Activated naive CD4-positive, alpha-beta T cell treated with anti-CD3 and anti-CD28 coated beads for 36 hours (primary cell): ENCODE measurements at regions of chr5 and their contacts with region 1.

Region 1: DNA sequence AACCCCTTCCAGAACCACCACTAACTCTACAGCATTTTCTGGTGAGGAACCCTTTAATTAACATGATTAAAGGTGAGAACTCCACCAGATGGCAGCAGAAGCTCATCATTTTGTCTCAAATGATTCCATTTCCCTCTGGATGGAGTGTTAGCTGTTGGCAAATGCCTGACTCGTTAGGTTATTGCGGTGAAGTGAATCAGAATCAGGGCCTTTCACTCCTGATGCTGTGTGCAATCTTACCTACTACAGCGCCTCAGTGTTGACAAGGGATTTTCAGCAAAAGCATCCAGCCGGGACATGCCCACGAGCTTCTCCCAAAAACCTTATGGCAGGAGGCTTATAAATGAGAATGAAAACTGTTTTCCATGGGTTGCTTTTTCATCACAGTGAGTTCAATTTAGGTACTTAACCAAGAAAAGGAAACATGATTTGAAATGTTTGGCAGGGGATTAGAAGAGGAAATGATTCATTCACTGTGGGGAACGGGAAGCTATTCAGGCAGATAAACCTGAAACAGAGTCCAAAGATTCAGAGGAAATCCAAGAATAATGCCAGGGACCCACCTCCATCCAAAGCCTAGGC is 48.0 kb upstream of the CAST start:
- DNase-seq: peak; percentile 65
- H3K4me3 Mint-ChIP-seq: no peak overlapping the region
- H3K27ac Mint-ChIP-seq: no peak overlapping the region
- H3K4me1 Mint-ChIP-seq: peaks cover 4% of the 10 kb centered on the region
- H3K27me3 Mint-ChIP-seq: peaks cover 5% of the 10 kb centered on the region

Region 2: DNA sequence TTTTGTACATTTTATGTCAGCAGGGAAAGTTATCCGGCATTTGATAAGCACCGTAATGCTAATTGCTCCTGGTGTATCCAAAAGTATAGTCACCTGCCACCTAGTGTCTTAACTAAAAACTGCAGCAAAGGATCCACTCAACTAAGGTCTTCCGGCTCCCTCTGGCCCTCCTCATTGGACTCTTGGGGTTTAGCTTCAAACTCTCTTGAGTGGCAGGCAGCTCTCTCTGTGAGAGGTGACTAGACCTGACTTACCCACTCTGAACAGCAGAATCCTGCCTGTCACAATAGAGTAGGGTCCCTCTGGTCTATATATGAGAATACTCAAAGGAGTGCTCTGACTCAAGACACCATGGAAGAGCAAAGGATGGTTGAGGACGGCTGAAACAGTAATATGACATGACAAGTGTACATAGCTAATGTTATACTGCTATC is 12.4 kb before region 1 on chr5:
- CTCF ChIA-PET with region 1: interaction called, 12 read pairs
- intact Hi-C with region 1: no loop called
- DNase-seq: peak; percentile 68
- H3K4me3 Mint-ChIP-seq: no peak overlapping the region
- H3K27ac Mint-ChIP-seq: no peak overlapping the region
- H3K4me1 Mint-ChIP-seq: peaks cover 10% of the 10 kb centered on the region
- H3K27me3 Mint-ChIP-seq: peaks cover 5% of the 10 kb centered on the region

Region 3: DNA sequence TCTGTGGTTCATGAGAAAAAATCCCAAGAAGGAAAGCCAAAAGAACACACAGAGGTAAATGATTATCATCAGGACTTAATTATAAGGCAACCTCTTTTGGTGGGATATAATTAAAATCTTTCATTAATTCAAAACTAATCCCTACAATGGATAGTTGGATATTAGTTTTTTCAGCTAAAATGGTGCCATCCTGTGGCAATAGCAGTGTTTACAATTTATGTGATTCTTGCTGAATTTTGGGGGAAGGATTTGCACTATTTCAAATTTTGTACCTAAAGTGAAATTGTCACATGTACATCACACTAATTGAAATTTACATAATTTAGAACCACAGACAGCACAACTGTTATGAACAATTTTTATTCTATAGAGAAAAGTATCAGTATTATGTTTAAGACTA is 115.0 kb after region 1 on chr5:
- CTCF ChIA-PET with region 1: interaction called, 5 read pairs
- intact Hi-C with region 1: loop called (anchors 1 kb)
- DNase-seq: no peak
- H3K4me3 Mint-ChIP-seq: no peak overlapping the region
- H3K27ac Mint-ChIP-seq: no peak overlapping the region
- H3K4me1 Mint-ChIP-seq: peaks cover 3% of the 10 kb centered on the region
- H3K27me3 Mint-ChIP-seq: no peaks in the 10 kb centered on the region

Region 4: DNA sequence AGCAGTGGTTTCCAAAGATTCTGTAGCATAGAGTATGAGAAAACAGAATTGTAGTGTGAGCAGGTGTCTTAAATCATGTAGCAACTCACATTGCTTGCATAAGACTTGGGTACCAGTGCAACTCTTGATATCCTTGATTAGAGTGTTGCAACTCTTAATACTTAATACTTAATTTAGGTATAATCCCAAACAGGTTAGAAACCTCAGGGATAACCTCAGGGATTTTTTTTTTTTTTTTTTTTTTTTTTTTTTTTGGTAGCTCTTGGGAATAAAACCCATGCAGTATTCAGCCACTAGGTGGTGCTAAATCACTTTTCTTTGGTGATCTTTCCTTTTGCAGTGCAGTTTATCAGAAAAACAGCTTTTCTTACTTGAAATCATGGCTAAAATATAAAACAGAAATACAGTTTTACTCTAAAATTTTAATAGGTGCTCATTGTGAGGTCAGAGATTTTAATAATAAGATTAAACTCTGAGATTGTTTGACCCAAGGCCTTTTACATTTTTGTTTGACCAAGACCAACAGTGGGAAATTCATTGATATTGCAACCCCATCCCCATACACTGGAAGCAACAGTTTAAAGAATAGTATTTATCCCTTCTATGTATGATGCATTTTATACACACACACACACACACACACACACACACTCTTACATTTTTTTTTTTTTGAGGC is 138.3 kb after region 1 on chr5:
- CTCF ChIA-PET with region 1: interaction called, 5 read pairs
- intact Hi-C with region 1: loop called (anchors 5 kb)
- DNase-seq: peak; percentile 54
- H3K4me3 Mint-ChIP-seq: no peak overlapping the region
- H3K27ac Mint-ChIP-seq: peak overlapping the region; percentile 25
- H3K4me1 Mint-ChIP-seq: peaks cover 25% of the 10 kb centered on the region
- H3K27me3 Mint-ChIP-seq: no peaks in the 10 kb centered on the region

Region 5: GRCh38 chr5:97142521-97143254 is 528.5 kb after region 1 on chr5 and contains the start of gene LIX1:
- CTCF ChIA-PET with region 1: no interaction called
- intact Hi-C with region 1: loop called (anchors 5 kb)
- DNase-seq: peak; percentile 60
- H3K4me3 Mint-ChIP-seq: no peak within 1 kb of the TSS
- H3K27ac Mint-ChIP-seq: no peak within 1 kb of the TSS
- H3K4me1 Mint-ChIP-seq: no peaks in the 10 kb centered on the region
- H3K27me3 Mint-ChIP-seq: peaks cover 6% of the 10 kb centered on the region
- total RNA-seq, gene LIX1: not detected